ENCODE measurements at regions of chr18 and their contacts with region 1.

Region 1: DNA sequence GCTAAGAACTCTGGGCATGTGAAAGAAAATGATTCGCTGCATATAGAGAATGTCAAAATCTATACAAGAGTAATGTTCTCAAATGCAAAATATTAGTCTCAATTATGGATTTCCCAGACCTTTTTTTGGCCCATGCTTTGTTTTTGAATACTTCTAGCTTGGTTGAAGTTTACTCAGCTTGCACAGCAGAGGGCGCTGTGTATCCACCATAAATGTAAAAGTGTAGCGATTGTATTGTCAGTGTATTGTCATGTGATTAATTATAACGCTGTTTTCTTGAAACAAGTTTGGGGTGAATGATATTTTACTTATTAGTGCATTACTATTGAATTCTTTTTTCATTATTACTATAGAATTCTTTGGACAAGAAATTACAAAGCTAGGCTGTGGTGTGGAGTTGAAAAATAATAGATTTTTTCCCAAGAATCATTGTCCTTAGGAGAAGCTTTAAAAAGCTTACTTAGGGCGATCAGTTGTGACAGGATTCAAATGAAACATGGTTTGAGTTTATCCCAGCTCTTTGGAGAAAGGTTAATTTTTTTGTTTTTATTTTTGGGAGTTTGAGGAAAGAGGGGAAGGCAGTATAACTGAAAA is 98.3 kb downstream of the PIK3C3 start:
- DNase-seq: peak; percentile 21 to 73 (median 55)
- ATAC-seq: peak; percentile 69
- H3K4me3 ChIP-seq: no peak overlapping the region
- H3K4me3 Mint-ChIP-seq: no peak overlapping the region
- H3K27ac ChIP-seq: no peak overlapping the region
- H3K27ac Mint-ChIP-seq: peak overlapping the region; percentile 28
- H3K4me1 ChIP-seq: peaks cover 3% of the 10 kb centered on the region
- H3K4me1 Mint-ChIP-seq: peaks cover 9% of the 10 kb centered on the region
- H3K27me3 ChIP-seq: no peaks in the 10 kb centered on the region
- H3K27me3 Mint-ChIP-seq: no peaks in the 10 kb centered on the region
- CTCF ChIP-seq: peak; percentile 100

Region 2: GRCh38 chr18:42028247-42028832 is 24.9 kb before region 1 on chr18:
- CTCF ChIA-PET with region 1: interaction called, 12 read pairs
- POLR2A ChIA-PET with region 1: interaction called, 3 read pairs
- intact Hi-C with region 1: no loop called
- DNase-seq: peak in 5 of 9 experiments; percentile 4 to 51 (median 22)
- ATAC-seq: peak; percentile 54
- H3K4me3 ChIP-seq: no peak overlapping the region
- H3K4me3 Mint-ChIP-seq: no peak overlapping the region
- H3K27ac ChIP-seq: no peak overlapping the region
- H3K27ac Mint-ChIP-seq: no peak overlapping the region
- H3K4me1 ChIP-seq: no peaks in the 10 kb centered on the region
- H3K4me1 Mint-ChIP-seq: peaks cover 23% of the 10 kb centered on the region
- H3K27me3 ChIP-seq: no peaks in the 10 kb centered on the region
- H3K27me3 Mint-ChIP-seq: no peaks in the 10 kb centered on the region
- CTCF ChIP-seq: peak; percentile 74

Region 3: GRCh38 chr18:43271593-43272432 is 1218.5 kb after region 1 on chr18:
- CTCF ChIA-PET with region 1: no interaction called
- POLR2A ChIA-PET with region 1: no interaction called
- intact Hi-C with region 1: loop called in 1 of 2 experiments (anchors 2 kb)
- DNase-seq: peak in 2 of 9 experiments; percentile 29 to 30
- ATAC-seq: no peak
- H3K4me3 ChIP-seq: no peak overlapping the region
- H3K4me3 Mint-ChIP-seq: no peak overlapping the region
- H3K27ac ChIP-seq: no peak overlapping the region
- H3K27ac Mint-ChIP-seq: no peak overlapping the region
- H3K4me1 ChIP-seq: no peaks in the 10 kb centered on the region
- H3K4me1 Mint-ChIP-seq: no peaks in the 10 kb centered on the region
- H3K27me3 ChIP-seq: no peaks in the 10 kb centered on the region
- H3K27me3 Mint-ChIP-seq: no peaks in the 10 kb centered on the region
- CTCF ChIP-seq: peak; percentile 73

Region 4: GRCh38 chr18:43587538-43588153 is 1534.4 kb after region 1 on chr18:
- CTCF ChIA-PET with region 1: no interaction called
- POLR2A ChIA-PET with region 1: no interaction called
- intact Hi-C with region 1: loop called in 1 of 2 experiments (anchors 5 kb)
- DNase-seq: peak in 2 of 9 experiments; percentile 11 to 29
- ATAC-seq: peak; percentile 23
- H3K4me3 ChIP-seq: no peak overlapping the region
- H3K4me3 Mint-ChIP-seq: no peak overlapping the region
- H3K27ac ChIP-seq: no peak overlapping the region
- H3K27ac Mint-ChIP-seq: no peak overlapping the region
- H3K4me1 ChIP-seq: no peaks in the 10 kb centered on the region
- H3K4me1 Mint-ChIP-seq: no peaks in the 10 kb centered on the region
- H3K27me3 ChIP-seq: no peaks in the 10 kb centered on the region
- H3K27me3 Mint-ChIP-seq: no peaks in the 10 kb centered on the region
- CTCF ChIP-seq: peak; percentile 53